Gastrocnemius medialis (tissue), 4 donors: ENCODE measurements at regions of chr9 and their contacts with region 1.

Region 1: GRCh38 chr9:92669890-92670708 is at the start of gene IPPK:
- DNase-seq: peak; percentile 95 to 97
- ATAC-seq: peak; percentile 98
- H3K4me3 ChIP-seq: peak within 1 kb of the TSS; percentile 65 to 95 (median 82)
- H3K27ac ChIP-seq: peak within 1 kb of the TSS; percentile 83 to 92 (median 87)
- H3K4me1 ChIP-seq: peaks cover 24 to 25% of the 10 kb centered on the region in 2 donors
- H3K27me3 ChIP-seq: no peaks in the 10 kb centered on the region
- CTCF ChIP-seq: no peak
- POLR2A ChIP-seq: peak; percentile 52 to 73
- total RNA-seq, gene IPPK: 6.8 to 11.4 (median 7.5) TPM

Region 2: GRCh38 chr9:92115071-92115858 is 554.8 kb before region 1 on chr9 and contains the start of gene SPTLC1:
- in situ Hi-C with region 1: no loop called
- intact Hi-C with region 1: loop called (anchors 1 kb)
- DNase-seq: peak; percentile 87 to 90
- ATAC-seq: peak; percentile 99 to 100
- H3K4me3 ChIP-seq: peak within 1 kb of the TSS; percentile 75 to 96 (median 90)
- H3K27ac ChIP-seq: peak within 1 kb of the TSS; percentile 86 to 96 (median 90)
- H3K4me1 ChIP-seq: peaks cover 14 to 17% of the 10 kb centered on the region in 2 donors
- H3K27me3 ChIP-seq: no peaks in the 10 kb centered on the region
- CTCF ChIP-seq: no peak
- POLR2A ChIP-seq: peak; percentile 75 to 81
- total RNA-seq, gene SPTLC1: 26.6 to 28.0 (median 26.9) TPM

Region 3: GRCh38 chr9:92325269-92325990 is 344.7 kb before region 1 on chr9 and contains the starts of genes CENPP and NOL8:
- in situ Hi-C with region 1: loop called in 1 of 4 experiments (anchors 10 kb)
- intact Hi-C with region 1: loop called (anchors 1 kb)
- DNase-seq: peak; percentile 80 to 85
- ATAC-seq: peak; percentile 98
- H3K4me3 ChIP-seq: peak within 1 kb of the TSS; percentile 77 to 95 (median 85)
- H3K27ac ChIP-seq: peak within 1 kb of the TSS; percentile 91 to 98 (median 97)
- H3K4me1 ChIP-seq: peaks cover 21 to 31% of the 10 kb centered on the region in 2 donors
- H3K27me3 ChIP-seq: no peaks in the 10 kb centered on the region
- CTCF ChIP-seq: peak in 1 of 5 experiments; percentile 24
- POLR2A ChIP-seq: peak in 1 of 2 donors; percentile 67
- total RNA-seq, gene CENPP: 1.8 to 11.5 (median 8.7) TPM
- total RNA-seq, gene NOL8: 11.5 to 20.2 (median 14.0) TPM

Region 4: DNA sequence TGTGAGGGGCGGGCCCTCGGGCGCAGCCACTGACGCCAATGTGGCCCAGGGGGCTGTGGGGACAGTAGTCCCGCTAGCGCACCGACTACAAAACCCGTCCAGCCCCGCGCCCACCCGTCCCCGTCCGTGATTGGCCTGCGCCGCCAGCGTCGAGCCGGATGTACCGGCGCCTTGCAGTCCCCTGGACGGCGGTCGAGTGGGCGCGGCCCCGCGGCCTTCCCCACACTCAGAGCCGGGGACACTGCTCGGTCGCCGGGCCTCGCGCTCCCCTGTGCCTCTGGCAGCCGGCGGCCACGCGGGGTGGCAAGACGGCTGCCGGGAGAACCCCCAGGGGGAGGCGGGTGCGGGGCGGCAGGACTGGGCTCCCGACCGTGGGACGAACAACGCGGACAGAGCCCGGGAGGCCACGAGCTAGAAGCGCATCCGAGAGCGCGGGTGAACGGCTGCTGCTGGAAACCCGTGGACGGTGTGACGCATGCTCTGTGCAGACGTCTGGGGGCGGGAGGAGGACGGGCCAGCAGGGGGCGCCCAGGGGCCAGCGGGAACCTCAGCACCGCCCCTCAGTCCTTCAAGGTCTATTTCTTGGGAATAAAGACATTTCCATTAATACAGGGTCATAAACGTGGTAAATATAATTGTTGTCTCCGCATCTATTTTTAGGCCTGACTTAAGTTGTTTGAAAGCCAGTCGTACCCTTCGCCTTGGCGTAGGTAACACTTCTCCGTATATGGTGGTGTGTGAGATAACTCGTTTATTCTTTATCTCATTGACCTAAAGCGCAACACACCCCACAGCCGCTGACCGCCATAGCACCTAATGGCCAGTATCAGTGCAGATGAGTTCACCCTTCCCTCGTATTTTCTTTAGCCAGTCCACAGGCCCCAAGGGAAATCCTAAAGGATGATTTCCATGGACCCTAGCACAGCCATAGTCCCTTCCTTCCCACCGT is 95.2 kb after region 1 on chr9:
- in situ Hi-C with region 1: loop called in 1 of 4 experiments (anchors 10 kb)
- intact Hi-C with region 1: loop called (anchors 1 kb)
- DNase-seq: peak; percentile 99
- ATAC-seq: peak; percentile 84 to 86
- H3K4me3 ChIP-seq: peak overlapping the region; percentile 72 to 99 (median 94)
- H3K27ac ChIP-seq: peak overlapping the region; percentile 93 to 100 (median 98)
- H3K4me1 ChIP-seq: peaks cover 38 to 47% of the 10 kb centered on the region in 2 donors
- H3K27me3 ChIP-seq: no peaks in the 10 kb centered on the region
- CTCF ChIP-seq: peak; percentile 83 to 98 (median 96)
- POLR2A ChIP-seq: peak; percentile 80 to 82

Region 5: GRCh38 chr9:92877531-92878430 is 207.7 kb after region 1 on chr9 and contains the start of gene ZNF484:
- in situ Hi-C with region 1: no loop called
- intact Hi-C with region 1: loop called (anchors 5 kb)
- DNase-seq: peak; percentile 90 to 96
- ATAC-seq: peak; percentile 100
- H3K4me3 ChIP-seq: peak within 1 kb of the TSS; percentile 66 to 79 (median 73)
- H3K27ac ChIP-seq: peak within 1 kb of the TSS; percentile 80 to 87 (median 81)
- H3K4me1 ChIP-seq: peaks cover 9 to 14% of the 10 kb centered on the region in 2 donors
- H3K27me3 ChIP-seq: no peaks in the 10 kb centered on the region
- CTCF ChIP-seq: no peak
- POLR2A ChIP-seq: no peak
- total RNA-seq, gene ZNF484: 2.8 to 7.3 (median 4.1) TPM